ENCODE measurements at regions of chr6 and their contacts with region 1.

Region 1: GRCh38 chr6:88698661-88699060 is 264.8 kb downstream of the RNGTT start:
- DNase-seq: no peak
- H3K4me3 ChIP-seq: no peak overlapping the region
- H3K27ac ChIP-seq: no peak overlapping the region
- H3K4me1 ChIP-seq: no peaks in the 10 kb centered on the region
- H3K27me3 ChIP-seq: no peaks in the 10 kb centered on the region
- CTCF ChIP-seq: no peak
- EP300 ChIP-seq: no peak
- POLR2A ChIP-seq: no peak

Region 2: GRCh38 chr6:88349511-88349910 is 349.1 kb before region 1 on chr6:
- in situ Hi-C with region 1: no loop called
- intact Hi-C with region 1: loop called (anchors 5 kb)
- DNase-seq: no peak
- H3K4me3 ChIP-seq: no peak overlapping the region
- H3K27ac ChIP-seq: no peak overlapping the region
- H3K4me1 ChIP-seq: no peaks in the 10 kb centered on the region
- H3K27me3 ChIP-seq: no peaks in the 10 kb centered on the region
- CTCF ChIP-seq: no peak
- EP300 ChIP-seq: no peak
- POLR2A ChIP-seq: no peak

Region 3: DNA sequence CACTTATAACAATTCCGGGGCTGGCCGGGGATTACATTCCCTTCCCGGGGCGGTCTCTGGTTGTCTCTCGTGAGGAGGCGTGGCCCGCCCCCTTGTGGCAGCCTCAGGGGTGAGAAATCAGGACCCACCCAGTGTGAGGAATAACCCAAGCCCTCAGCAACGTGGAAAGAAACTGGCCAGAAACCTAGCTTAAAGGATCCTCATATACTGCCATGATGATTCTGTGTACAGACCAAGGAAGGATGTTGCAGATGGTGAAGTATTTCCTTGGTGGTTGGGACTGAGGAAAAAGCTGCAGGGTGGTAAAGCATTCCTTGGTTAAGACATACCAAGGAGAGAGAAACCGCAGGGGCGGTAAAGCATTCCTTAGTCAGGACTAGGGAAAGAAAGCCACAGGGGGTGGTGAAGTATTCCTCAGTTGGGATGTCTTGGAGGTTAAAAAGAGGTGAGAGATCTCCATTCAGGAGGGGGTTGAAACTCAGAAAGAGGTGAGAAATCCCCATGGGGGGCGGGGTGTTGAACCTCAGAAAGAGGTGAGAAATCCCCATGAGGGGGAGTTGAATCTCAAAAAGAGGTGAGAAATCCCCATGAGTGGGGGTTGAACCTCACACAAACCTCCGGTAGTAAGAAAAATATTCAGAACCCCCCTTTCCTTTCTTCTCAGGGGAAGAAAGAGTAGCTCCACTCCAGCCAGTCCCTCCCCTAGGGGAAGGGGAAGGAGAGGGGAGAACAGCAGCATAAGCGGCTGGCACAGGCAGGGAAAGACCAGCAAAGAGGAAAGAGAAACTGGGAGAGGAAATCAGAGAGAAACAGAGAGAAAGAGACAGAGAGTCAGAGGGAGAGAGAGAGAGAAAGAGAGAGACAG is 26.7 kb after region 1 on chr6:
- in situ Hi-C with region 1: no loop called
- intact Hi-C with region 1: no loop called
- DNase-seq: no peak
- H3K4me3 ChIP-seq: no peak overlapping the region
- H3K27ac ChIP-seq: no peak overlapping the region
- H3K4me1 ChIP-seq: no peaks in the 10 kb centered on the region
- H3K27me3 ChIP-seq: no peaks in the 10 kb centered on the region
- CTCF ChIP-seq: no peak
- EP300 ChIP-seq: no peak
- POLR2A ChIP-seq: no peak

Region 4: GRCh38 chr6:88748141-88748540 is 49.5 kb after region 1 on chr6:
- in situ Hi-C with region 1: no loop called
- intact Hi-C with region 1: no loop called
- DNase-seq: no peak
- H3K4me3 ChIP-seq: no peak overlapping the region
- H3K27ac ChIP-seq: no peak overlapping the region
- H3K4me1 ChIP-seq: no peaks in the 10 kb centered on the region
- H3K27me3 ChIP-seq: no peaks in the 10 kb centered on the region
- CTCF ChIP-seq: no peak
- EP300 ChIP-seq: no peak
- POLR2A ChIP-seq: no peak